PC-9 (cell line): ENCODE measurements at regions of chr13 and their contacts with region 1.

Region 1: GRCh38 chr13:108146642-108147041 is 68.7 kb downstream of the LIG4 start:
- DNase-seq: no peak
- H3K4me3 ChIP-seq: no peak overlapping the region
- H3K27ac ChIP-seq: no peak overlapping the region
- H3K4me1 ChIP-seq: no peaks in the 10 kb centered on the region
- H3K27me3 ChIP-seq: no peaks in the 10 kb centered on the region
- CTCF ChIP-seq: no peak

Region 2: GRCh38 chr13:107625648-107626047 is 521.0 kb before region 1 on chr13:
- CTCF ChIA-PET with region 1: interaction called, 15 read pairs
- POLR2A ChIA-PET with region 1: no interaction called
- intact Hi-C with region 1: no loop called
- DNase-seq: no peak
- H3K4me3 ChIP-seq: no peak overlapping the region
- H3K27ac ChIP-seq: no peak overlapping the region
- H3K4me1 ChIP-seq: no peaks in the 10 kb centered on the region
- H3K27me3 ChIP-seq: no peaks in the 10 kb centered on the region
- CTCF ChIP-seq: no peak